Esophagus muscularis mucosa (tissue), 4 donors: ENCODE measurements at regions of chr5 and their contacts with region 1.

Region 1: DNA sequence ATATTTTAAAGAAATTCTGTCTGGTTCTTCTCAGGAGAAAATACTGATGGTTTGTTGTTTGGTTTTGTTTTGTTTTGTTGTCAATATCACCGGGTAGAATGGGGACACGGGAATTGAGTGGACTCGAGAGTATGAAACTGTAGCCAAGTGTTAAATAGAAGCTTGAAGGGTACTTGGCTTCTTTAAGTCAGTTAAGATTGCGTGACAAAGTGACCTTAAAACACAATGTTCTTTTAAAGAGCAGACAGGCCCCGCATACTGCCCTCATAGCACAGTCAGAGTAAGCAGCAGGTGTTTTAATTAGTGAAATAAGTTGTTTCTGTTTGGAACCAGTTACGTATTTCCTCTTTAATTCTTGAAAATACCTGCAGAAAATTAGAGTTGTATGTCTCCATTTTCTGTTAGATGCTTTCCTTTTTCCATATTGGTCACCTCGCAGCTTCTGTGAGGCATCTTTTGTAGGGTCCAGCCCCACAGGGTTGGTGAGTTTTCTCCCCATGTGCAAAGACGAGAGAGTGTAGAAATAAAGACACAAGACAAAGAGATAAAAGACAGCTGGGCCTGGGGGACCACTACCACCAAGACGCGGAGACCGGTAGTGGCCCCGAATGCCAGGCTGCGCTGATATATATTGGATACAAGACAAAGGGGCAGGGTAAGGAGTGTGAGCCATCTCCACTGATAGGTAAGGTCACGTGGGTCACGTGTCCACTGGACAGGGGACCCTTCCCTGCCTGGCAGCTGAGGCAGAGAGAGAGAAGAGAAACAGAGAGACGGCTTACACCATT is 9.6 kb downstream of the TRIP13 start:
- DNase-seq: no peak
- H3K4me3 ChIP-seq: no peak overlapping the region
- H3K27ac ChIP-seq: no peak overlapping the region
- H3K4me1 ChIP-seq: peaks cover 0 to 6% (median 5%) of the 10 kb centered on the region in 4 donors
- H3K27me3 ChIP-seq: no peaks in the 10 kb centered on the region
- CTCF ChIP-seq: no peak
- EP300 ChIP-seq: no peak
- POLR2A ChIP-seq: no peak

Region 2: DNA sequence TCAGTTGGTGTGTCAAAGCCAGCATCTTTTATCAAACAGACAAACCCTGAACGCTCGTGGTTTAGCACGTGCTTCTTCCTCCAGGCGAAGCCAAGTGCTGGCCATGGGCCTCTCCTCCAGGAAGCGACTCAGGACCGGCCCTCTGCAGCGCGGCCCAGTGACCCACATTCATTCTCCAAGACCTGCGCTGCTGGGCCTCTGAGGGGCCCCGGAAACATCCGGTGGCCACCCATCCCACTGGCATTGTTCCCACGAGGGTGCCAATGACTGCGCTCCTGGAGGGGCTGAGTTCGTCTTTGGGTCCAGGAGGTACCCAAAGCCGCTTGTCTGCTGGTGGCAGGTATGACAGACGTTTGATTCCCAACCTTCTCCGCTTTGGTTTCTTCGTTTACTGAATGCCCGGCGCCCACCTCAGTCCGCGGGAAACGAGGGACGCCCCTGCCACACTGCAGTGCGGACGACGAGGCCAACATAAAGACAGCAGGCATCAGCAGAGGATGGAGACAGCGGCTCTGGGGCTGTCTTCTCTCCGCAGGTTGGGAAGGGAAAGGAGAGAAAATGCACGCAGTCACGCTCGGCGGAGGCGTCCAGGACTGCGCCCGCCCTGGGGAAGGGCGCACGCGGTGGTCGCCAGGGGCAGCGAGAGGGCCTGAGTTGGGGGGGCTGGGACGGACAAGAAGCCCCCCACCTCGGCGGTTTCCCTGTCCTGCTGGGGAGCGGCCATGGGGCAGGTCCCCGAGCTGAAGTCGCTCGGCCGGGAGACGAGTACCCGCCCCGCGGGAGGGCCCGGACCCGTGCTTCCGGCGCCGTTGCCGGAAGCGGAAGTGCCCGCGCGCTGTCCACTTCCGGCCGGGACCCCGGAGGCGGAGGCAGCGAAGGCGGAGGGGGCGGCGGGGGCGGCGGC is 459.7 kb before region 1 on chr5 and contains the start of gene EXOC3:
- intact Hi-C with region 1: loop called (anchors 10 kb)
- DNase-seq: no peak
- H3K4me3 ChIP-seq: peak within 1 kb of the TSS; percentile 80 to 99 (median 91)
- H3K27ac ChIP-seq: peak within 1 kb of the TSS; percentile 80 to 87 (median 84)
- H3K4me1 ChIP-seq: peaks cover 19 to 42% (median 22%) of the 10 kb centered on the region in 4 donors
- H3K27me3 ChIP-seq: peaks cover 0 to 8% (median 0%) of the 10 kb centered on the region in 4 donors
- CTCF ChIP-seq: no peak
- EP300 ChIP-seq: no peak
- POLR2A ChIP-seq: peak; percentile 33
- total RNA-seq, gene EXOC3: 48.6 to 82.1 (median 59.3) TPM

Region 3: GRCh38 chr5:671459-672328 is 230.6 kb before region 1 on chr5:
- intact Hi-C with region 1: loop called (anchors 5 kb)
- DNase-seq: no peak
- H3K4me3 ChIP-seq: peak overlapping the region; percentile 11 to 46 (median 36)
- H3K27ac ChIP-seq: peak overlapping the region; percentile 75 to 81 (median 76)
- H3K4me1 ChIP-seq: peaks cover 47 to 93% (median 87%) of the 10 kb centered on the region in 4 donors
- H3K27me3 ChIP-seq: no peaks in the 10 kb centered on the region
- CTCF ChIP-seq: peak; percentile 88 to 98 (median 90)
- EP300 ChIP-seq: no peak
- POLR2A ChIP-seq: no peak